GM13976 (cell line): ENCODE measurements at regions of chr2 and their contacts with region 1.

Region 1: DNA sequence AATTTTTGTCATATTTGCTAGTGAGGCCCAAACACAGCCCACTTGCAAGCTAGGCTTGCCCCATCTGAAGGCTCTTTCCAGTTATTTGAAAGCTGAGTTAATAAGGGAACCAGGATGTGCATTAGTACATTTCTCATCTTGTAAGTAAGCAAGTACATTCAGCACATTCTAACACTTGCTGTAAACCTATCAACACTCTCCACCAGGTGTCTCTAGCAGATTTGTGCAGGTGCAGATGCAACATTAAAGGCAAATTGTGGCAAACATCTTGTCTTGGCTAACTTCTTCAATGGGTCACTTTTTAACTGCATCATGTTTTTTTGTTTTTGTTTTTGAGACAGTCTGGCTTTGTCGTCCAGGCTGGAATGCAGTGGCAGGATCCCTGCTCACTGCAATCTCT is 25.3 kb upstream of the MFSD6 start:
- DNase-seq: peak; percentile 75
- CTCF ChIP-seq: peak; percentile 63

Region 2: DNA sequence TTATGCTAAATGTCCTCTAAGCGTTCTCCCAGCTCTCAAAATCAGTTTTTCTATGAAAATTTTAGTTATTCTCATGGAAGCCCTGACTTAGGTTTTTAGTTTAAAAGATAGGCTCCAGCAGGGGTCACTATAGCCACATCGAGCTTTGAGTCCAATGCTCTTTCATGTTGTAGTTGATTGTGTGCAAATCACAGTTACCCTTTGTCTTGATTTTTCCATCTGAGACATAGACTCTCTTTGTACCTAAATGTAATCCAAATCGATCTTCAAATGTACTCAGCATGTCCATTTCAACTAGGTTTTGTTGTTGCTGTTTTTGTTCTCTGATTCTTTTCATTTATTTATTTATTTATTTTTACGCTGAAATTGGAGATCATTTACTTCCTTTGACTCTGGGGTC is 293.9 kb before region 1 on chr2:
- in situ Hi-C with region 1: loop called (anchors 10 kb)
- DNase-seq: peak; percentile 34
- CTCF ChIP-seq: peak; percentile 50

Region 3: GRCh38 chr2:190507135-190507534 is 124.3 kb after region 1 on chr2:
- in situ Hi-C with region 1: loop called (anchors 10 kb)
- DNase-seq: no peak
- CTCF ChIP-seq: no peak

Region 4: DNA sequence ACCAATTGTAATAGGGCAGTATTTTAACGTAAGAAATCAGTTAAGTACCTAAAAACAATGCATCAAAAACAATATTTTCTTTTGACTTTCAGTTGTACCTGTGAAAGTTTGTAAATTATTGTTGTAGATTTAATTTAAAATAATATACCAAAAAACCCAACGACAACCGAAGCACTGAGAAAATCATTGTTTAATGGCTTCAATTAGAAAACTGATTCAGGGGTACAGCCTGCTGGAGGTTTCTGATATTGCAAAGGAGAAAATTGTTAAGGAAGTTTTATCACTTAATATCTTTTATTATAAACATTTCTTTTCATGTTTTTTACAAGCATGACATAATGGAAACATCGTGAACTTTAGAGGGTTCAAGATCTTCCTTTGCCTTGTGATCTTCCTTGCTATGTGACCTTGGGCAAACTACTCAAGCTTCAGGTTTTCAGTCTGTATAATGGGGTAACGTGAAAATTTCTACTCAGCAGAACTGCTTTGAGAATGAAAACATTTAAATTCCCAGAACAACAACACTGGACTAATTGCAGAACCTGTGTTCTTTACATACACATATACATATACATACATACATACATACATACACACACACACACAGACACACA is 421.4 kb after region 1 on chr2:
- in situ Hi-C with region 1: loop called (anchors 25 kb)
- DNase-seq: no peak
- CTCF ChIP-seq: no peak